Dendritic cell treated with granulocyte-macrophage colony-stimulating factor and Interleukin-4, amounts not matched to agents 40 ng/mL and 50 ng/mL, for 4 days (primary cell): ENCODE measurements at regions of chr17 and their contacts with region 1.

Region 1: DNA sequence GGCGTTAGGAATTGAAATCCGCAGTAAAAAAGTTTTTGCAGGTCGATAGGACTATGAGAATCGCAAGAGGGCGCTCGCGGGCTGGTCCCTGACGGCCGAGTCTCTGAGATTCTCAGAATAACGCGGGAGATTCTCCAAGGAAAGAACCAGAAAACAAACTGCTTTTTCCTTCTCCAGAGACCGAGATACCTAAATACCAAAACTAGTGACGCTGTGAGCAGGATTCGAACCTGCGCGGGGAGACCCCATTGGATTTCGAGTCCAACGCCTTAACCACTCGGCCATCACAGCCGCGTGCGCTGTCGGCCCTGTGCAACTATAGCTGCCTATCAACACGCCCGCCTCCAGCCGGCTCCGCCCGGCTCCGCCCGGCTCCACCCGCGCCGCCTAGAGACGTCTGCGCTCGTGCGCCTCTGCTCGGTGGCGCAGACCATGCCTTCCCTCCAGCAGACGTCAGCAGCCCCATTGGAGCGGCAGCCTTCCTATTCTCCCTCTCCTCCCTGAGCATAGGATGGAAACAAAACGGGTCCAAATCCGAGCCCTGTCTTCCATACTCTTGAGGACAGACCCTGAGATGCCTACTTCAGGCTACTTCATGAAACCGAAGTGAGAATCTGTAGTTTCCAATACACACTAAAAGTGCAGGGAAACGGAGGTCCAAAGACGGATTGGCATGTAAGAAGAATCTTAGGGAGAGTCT is 13.4 kb downstream of the PER1 start:
- H3K4me3 Mint-ChIP-seq: no peak overlapping the region
- H3K27ac Mint-ChIP-seq: no peak overlapping the region
- H3K4me1 Mint-ChIP-seq: no peaks in the 10 kb centered on the region
- H3K27me3 Mint-ChIP-seq: peaks cover 14% of the 10 kb centered on the region

Region 2: DNA sequence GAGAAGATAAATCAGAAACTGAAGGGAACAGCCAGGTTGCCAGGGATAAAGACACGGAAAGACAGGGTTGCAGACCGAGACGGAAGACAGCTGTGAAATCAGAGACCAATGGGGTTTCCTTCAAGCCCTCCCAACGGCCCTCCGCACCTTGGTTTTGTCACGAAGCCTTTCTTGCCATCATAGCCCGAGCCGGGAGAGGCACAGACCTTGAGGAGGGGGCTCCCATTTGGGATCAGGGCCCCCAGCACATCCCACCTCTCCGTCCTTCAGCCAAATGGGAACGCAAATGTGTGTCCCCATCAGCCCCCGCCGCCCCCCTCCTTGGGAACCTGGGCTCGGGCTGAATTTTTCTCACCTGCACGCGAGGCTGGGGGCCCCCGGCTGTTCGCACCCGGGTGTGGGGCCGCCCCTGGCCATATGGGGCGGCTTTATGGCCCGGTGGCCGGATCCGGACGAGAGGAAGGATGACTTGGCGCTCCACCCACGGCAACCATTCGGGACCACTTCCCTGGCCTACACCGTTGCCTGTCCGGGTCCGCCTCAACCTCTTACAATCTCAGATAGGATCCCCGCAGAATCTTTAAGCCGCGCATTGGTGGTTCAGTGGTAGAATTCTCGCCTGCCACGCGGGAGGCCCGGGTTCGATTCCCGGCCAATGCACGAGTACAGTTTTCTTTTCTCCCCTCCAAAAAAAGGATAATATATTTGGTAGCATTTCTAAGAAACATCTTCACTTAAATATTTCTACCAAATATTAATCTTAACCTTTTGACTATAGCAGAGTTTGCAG is 13.5 kb before region 1 on chr17:
- intact Hi-C with region 1: no loop called
- H3K4me3 Mint-ChIP-seq: peak overlapping the region; percentile 83
- H3K27ac Mint-ChIP-seq: no peak overlapping the region
- H3K4me1 Mint-ChIP-seq: peaks cover 62% of the 10 kb centered on the region
- H3K27me3 Mint-ChIP-seq: peaks cover 91% of the 10 kb centered on the region

Region 3: DNA sequence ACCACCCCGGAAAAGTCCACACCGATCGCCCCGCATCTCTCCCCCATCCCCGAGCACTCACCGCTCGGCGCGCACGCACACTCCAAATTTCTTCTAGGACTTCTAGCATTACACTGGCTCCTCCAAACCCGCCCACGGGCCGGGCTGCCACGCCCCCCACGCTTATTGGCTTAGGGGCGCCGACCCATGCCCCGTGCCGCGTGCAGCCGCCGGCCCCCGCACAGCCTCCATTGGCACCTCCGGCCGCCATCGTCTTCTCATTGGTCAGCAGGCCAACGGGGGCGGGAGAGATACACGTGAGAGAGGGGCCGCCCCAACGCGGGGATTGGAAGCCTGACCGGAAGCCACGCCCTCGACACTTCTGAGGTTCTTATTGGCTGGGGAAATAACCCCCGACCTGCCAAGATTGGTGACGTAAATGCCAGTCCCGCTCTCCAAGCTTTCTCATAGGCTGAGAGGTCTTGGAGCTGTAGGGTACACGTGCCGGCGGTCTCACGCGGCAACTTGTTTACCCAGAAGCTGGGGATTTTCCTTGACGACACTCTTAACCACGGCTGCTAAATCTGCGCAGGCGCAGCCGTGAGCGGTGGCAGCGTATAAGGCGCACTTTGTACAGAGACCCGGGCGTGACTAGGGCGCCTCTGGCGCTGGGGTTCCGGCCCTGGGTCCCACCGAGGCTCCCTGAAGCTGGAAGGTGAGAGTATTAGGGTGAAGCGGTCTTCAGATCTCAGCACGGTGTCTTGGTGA is 17.6 kb after region 1 on chr17:
- intact Hi-C with region 1: loop called (anchors 1 kb)
- H3K4me3 Mint-ChIP-seq: no peak overlapping the region
- H3K27ac Mint-ChIP-seq: no peak overlapping the region
- H3K4me1 Mint-ChIP-seq: peaks cover 32% of the 10 kb centered on the region
- H3K27me3 Mint-ChIP-seq: no peaks in the 10 kb centered on the region

Region 4: DNA sequence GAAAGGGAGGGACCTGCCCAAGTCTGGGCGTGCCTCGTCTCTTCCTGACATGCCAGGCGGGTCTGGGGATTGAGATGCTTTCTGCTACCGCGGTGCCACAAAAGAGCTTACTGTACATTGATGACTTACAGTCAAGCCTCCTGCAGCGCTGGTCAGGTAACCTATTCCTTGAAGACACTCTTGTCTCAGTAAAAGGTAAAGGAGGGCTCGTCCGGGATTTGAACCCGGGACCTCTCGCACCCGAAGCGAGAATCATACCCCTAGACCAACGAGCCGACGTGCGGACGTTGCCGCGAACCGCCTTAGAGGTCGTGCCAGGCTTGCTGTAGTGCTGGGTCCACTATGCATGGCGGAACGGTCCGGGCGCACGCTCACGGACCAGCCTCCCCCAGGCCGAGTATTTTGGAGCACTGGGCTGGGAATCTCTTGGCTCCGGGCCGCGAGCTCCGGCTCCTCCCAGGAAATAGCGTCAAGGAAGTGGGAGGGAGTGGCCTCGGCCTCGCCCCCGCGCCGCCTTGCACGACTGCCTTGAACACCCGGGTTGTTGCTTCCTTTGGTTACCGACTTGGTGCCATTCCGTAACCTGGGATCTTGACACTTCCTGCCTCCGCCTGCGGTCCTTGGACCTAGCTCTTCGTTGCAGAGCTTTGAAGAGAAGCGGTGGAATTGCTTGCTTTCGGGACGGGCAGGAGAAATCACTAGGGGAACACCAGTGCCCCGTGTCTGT is 84.0 kb after region 1 on chr17:
- intact Hi-C with region 1: loop called (anchors 5 kb)
- H3K4me3 Mint-ChIP-seq: peak overlapping the region; percentile 89
- H3K27ac Mint-ChIP-seq: peak overlapping the region; percentile 99
- H3K4me1 Mint-ChIP-seq: peaks cover 63% of the 10 kb centered on the region
- H3K27me3 Mint-ChIP-seq: no peaks in the 10 kb centered on the region